ENCODE measurements at regions of chr11 and their contacts with region 1.

Region 1: DNA sequence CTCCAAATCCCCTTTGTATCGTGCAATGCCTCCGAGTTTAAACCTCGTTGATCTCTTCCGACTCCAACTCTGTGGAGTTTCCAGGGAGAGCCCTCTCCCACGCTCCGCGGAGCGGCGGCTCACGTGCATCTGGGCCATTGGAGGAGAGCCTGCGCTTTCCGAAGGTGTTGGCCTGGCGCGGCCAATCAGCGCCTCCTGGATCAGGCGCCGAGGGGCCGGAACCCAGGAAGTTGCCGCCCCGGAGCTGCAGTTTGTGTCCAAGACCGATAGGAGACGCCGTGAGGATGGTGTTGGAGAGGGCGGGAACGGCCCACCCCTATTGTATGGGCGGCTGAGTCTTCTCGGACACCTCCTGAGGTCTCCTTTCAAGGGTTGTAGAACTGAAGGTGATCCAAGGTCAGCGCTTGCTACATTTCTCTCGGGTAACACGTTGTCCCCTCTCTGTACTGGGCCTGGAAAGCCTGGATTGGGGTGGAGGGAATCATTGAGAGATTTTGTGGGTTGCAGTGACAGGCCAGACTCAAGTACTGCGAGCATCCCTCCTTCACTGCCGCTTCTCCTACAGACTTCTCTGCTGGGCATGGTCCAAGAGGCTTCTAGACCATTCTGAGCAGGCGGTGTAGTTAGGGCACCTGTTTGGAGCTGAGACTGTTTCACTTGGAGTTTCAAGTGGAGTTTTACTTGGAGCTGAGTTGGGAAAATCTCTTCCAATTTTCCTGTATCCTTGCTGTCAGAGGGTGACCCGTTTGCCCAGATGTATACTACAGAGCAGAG is 1.7 kb downstream of the ADAMTS15 start:
- DNase-seq: peak; percentile 94
- ATAC-seq: peak; percentile 69

Region 2: DNA sequence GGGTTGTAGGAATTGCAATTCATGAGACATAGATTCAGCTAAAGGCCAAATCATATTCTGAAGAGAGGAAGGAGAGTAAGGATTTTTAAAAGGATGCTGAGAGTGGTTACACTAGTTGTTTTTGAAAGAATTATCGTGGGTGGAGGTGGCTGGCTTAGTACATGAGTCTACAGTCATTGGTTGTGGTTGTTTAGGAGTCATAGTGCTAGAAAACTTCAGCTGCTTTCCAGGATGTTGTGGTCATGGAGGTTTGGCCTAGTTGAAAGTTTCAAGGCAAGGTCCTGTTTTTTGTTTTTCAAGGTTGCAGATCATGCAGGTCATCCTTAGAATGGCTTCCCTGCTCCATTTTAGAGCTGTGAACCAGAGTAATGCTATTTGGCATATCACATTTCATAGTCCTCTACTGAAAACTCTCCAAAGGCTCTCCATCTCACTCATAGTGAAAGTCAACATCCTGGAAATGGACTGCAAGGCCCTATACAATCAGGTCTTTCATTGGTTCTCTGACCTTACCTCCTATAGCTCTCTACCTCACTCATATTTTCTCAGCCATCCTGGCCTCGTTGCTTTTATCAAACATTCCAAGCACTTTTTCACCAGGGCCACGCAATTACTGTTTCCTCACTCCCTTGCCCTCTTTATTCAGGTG is 109.4 kb before region 1 on chr11:
- intact Hi-C with region 1: no loop called
- DNase-seq: no peak
- ATAC-seq: no peak

Region 3: DNA sequence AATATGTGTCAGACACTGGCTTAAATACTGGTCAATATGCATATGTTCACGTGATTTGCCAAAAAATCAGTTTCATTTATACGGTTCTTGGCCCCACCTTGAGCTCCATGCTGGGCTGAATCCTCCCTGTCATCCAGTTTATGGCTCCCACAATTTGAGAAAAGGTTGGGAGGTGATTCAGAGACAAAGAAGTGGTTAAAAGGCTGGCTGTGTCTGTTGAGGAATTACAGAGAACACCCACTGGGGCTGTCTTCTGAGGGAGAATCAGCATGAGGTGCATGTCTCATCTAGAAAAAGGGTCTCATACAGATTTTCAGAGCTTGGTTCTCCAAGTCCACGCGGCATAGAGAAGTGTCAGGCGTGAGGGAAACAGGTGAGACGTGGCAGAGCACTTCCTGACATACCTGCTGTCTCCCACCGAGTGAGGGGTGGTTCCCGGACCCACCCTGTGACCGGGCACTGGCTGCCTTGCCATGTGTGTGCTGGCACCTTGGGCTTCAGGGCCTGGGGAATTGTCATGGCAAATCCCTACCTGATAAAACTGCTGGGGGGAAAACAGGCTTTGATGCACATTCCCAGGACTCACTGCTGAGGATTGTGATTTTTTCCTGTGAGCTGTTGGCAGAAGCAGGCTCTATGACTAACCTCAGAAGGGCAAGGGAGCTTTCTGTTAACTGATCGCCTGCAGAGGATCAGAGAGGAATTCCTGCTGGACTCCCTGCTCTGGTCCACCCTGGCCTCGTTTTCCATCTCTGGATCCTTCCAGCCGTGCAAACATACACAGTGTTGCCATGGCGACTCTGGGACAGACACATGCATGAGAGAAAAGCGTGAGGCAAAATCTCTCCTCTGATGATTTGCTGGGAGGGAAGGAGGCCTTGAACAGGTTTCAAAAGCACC is 221.9 kb after region 1 on chr11:
- intact Hi-C with region 1: loop called (anchors 10 kb)
- DNase-seq: peak; percentile 78
- ATAC-seq: peak; percentile 63

Measured in left ventricle myocardium superior (tissue), 1 donor.